CD8-positive, alpha-beta T cell (primary cell): ENCODE measurements at regions of chr19 and their contacts with region 1.

Region 1: GRCh38 chr19:55503502-55504251 is 15.4 kb downstream of the SSC5D start:
- DNase-seq: peak; percentile 86 to 98 (median 93)
- ATAC-seq: peak; percentile 94
- H3K4me3 ChIP-seq: peak overlapping the region; percentile 57 to 66
- H3K4me3 Mint-ChIP-seq: peak overlapping the region; percentile 77
- H3K27ac ChIP-seq: peak overlapping the region; percentile 49 to 75
- H3K27ac Mint-ChIP-seq: peak overlapping the region; percentile 80
- H3K4me1 ChIP-seq: peaks cover 4% of the 10 kb centered on the region
- H3K4me1 Mint-ChIP-seq: peaks cover 12% of the 10 kb centered on the region
- H3K27me3 ChIP-seq: peaks cover 0 to 2% of the 10 kb centered on the region in 2 experiments
- H3K27me3 Mint-ChIP-seq: peaks cover 2% of the 10 kb centered on the region
- CTCF ChIP-seq: peak; percentile 99

Region 2: GRCh38 chr19:55080968-55081772 is 422.5 kb before region 1 on chr19:
- CTCF ChIA-PET with region 1: no interaction called
- POLR2A ChIA-PET with region 1: no interaction called
- intact Hi-C with region 1: loop called in 1 of 2 experiments (anchors 1 kb)
- DNase-seq: peak; percentile 82 to 92 (median 89)
- ATAC-seq: peak; percentile 76
- H3K4me3 ChIP-seq: peak overlapping the region; percentile 58 to 83
- H3K4me3 Mint-ChIP-seq: peak overlapping the region; percentile 84
- H3K27ac ChIP-seq: peak overlapping the region in 1 of 2 experiments; percentile 38
- H3K27ac Mint-ChIP-seq: no peak overlapping the region
- H3K4me1 ChIP-seq: peaks cover 30% of the 10 kb centered on the region
- H3K4me1 Mint-ChIP-seq: peaks cover 22% of the 10 kb centered on the region
- H3K27me3 ChIP-seq: peaks cover 18 to 23% of the 10 kb centered on the region in 2 experiments
- H3K27me3 Mint-ChIP-seq: peaks cover 61% of the 10 kb centered on the region
- CTCF ChIP-seq: no peak

Region 3: GRCh38 chr19:55258828-55259539 is 244.7 kb before region 1 on chr19 and contains the start of gene PPP6R1:
- CTCF ChIA-PET with region 1: interaction called, 16 read pairs
- POLR2A ChIA-PET with region 1: no interaction called
- intact Hi-C with region 1: no loop called
- DNase-seq: peak; percentile 86 to 98 (median 92)
- ATAC-seq: peak; percentile 81
- H3K4me3 ChIP-seq: peak within 1 kb of the TSS; percentile 80 to 93
- H3K4me3 Mint-ChIP-seq: peak within 1 kb of the TSS; percentile 94
- H3K27ac ChIP-seq: peak within 1 kb of the TSS; percentile 87 to 95
- H3K27ac Mint-ChIP-seq: peak within 1 kb of the TSS; percentile 98
- H3K4me1 ChIP-seq: peaks cover 37% of the 10 kb centered on the region
- H3K4me1 Mint-ChIP-seq: peaks cover 39% of the 10 kb centered on the region
- H3K27me3 ChIP-seq: no peaks in the 10 kb centered on the region
- H3K27me3 Mint-ChIP-seq: no peaks in the 10 kb centered on the region
- CTCF ChIP-seq: no peak
- total RNA-seq, gene PPP6R1: 163 to 172 TPM

Region 4: GRCh38 chr19:55467236-55468053 is 36.2 kb before region 1 on chr19:
- CTCF ChIA-PET with region 1: interaction called, 72 read pairs
- POLR2A ChIA-PET with region 1: interaction called, 4 read pairs
- intact Hi-C with region 1: loop called (anchors 1 kb)
- DNase-seq: peak; percentile 38 to 83 (median 66)
- ATAC-seq: peak; percentile 95
- H3K4me3 ChIP-seq: no peak overlapping the region
- H3K4me3 Mint-ChIP-seq: no peak overlapping the region
- H3K27ac ChIP-seq: no peak overlapping the region
- H3K27ac Mint-ChIP-seq: no peak overlapping the region
- H3K4me1 ChIP-seq: peaks cover 3% of the 10 kb centered on the region
- H3K4me1 Mint-ChIP-seq: peaks cover 3% of the 10 kb centered on the region
- H3K27me3 ChIP-seq: no peaks in the 10 kb centered on the region
- H3K27me3 Mint-ChIP-seq: no peaks in the 10 kb centered on the region
- CTCF ChIP-seq: peak; percentile 92

Region 5: GRCh38 chr19:55599468-55600279 is 96.0 kb after region 1 on chr19 and contains the start of gene FIZ1:
- CTCF ChIA-PET with region 1: interaction called, 4 read pairs
- POLR2A ChIA-PET with region 1: interaction called, 3 read pairs
- intact Hi-C with region 1: loop called in 1 of 2 experiments (anchors 1 kb)
- DNase-seq: peak; percentile 90 to 98 (median 95)
- ATAC-seq: peak; percentile 69
- H3K4me3 ChIP-seq: peak within 1 kb of the TSS; percentile 80 to 81
- H3K4me3 Mint-ChIP-seq: peak within 1 kb of the TSS; percentile 100
- H3K27ac ChIP-seq: peak within 1 kb of the TSS; percentile 75 to 95
- H3K27ac Mint-ChIP-seq: peak within 1 kb of the TSS; percentile 99
- H3K4me1 ChIP-seq: peaks cover 14% of the 10 kb centered on the region
- H3K4me1 Mint-ChIP-seq: peaks cover 29% of the 10 kb centered on the region
- H3K27me3 ChIP-seq: no peaks in the 10 kb centered on the region
- H3K27me3 Mint-ChIP-seq: no peaks in the 10 kb centered on the region
- CTCF ChIP-seq: no peak
- total RNA-seq, gene FIZ1: 6.7 to 8.4 TPM